Right lobe of liver (tissue), 6 donors: ENCODE measurements at regions of chr17 and their contacts with region 1.

Region 1: DNA sequence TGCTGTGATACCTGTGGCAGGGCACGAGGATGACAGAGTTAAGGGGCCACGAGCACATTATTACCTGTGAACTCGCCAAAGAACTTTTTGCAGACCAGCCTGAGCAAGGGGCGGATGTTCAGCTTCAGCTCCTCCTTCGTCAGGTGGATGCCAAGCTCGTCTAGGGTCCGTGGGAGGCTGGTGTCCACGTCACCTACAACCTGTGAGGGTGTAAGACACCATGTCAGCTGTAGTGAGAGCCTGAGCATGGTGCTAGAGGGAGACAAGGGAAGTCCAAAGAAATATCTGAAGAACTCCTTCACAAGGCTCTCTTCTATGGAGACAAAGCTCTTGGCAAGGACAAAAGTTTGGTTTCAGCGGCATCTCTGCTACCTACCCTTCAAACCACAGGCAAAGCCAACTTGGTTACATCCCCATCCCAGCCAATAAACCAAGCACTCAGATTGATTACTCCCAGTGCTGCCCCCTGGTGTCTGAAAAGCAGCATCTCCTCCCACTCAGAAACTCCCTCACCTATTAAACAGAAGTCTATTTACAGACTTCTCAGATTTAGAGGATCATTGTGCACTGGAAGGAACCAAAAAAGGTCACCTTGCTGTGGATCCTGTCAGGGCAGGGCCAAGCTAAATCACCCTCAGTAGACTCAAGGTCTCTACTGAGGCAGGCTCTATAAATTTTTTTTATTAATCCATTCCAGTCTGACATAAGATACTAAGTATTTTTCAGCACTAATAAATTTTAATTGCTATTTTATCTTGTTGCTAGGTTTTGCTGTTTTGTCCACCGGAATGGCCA is 17.4 kb downstream of the HIGD1B start:
- DNase-seq: peak in 2 of 3 donors; percentile 62 to 68
- ATAC-seq: peak; percentile 81 to 89 (median 84)
- H3K4me3 ChIP-seq: no peak overlapping the region
- H3K27ac ChIP-seq: no peak overlapping the region
- H3K4me1 ChIP-seq: no peaks in the 10 kb centered on the region
- H3K27me3 ChIP-seq: no peaks in the 10 kb centered on the region
- CTCF ChIP-seq: peak; percentile 80 to 89 (median 85)
- POLR2A ChIP-seq: no peak

Region 2: GRCh38 chr17:44775136-44775837 is 89.8 kb before region 1 on chr17:
- intact Hi-C with region 1: loop called (anchors 2 to 5 kb)
- DNase-seq: peak; percentile 97 to 98 (median 98)
- ATAC-seq: peak; percentile 93 to 96 (median 95)
- H3K4me3 ChIP-seq: peak overlapping the region; percentile 45 to 59 (median 57)
- H3K27ac ChIP-seq: no peak overlapping the region
- H3K4me1 ChIP-seq: peaks cover 0 to 13% (median 3%) of the 10 kb centered on the region in 4 donors
- H3K27me3 ChIP-seq: no peaks in the 10 kb centered on the region
- CTCF ChIP-seq: no peak
- POLR2A ChIP-seq: no peak

Region 3: DNA sequence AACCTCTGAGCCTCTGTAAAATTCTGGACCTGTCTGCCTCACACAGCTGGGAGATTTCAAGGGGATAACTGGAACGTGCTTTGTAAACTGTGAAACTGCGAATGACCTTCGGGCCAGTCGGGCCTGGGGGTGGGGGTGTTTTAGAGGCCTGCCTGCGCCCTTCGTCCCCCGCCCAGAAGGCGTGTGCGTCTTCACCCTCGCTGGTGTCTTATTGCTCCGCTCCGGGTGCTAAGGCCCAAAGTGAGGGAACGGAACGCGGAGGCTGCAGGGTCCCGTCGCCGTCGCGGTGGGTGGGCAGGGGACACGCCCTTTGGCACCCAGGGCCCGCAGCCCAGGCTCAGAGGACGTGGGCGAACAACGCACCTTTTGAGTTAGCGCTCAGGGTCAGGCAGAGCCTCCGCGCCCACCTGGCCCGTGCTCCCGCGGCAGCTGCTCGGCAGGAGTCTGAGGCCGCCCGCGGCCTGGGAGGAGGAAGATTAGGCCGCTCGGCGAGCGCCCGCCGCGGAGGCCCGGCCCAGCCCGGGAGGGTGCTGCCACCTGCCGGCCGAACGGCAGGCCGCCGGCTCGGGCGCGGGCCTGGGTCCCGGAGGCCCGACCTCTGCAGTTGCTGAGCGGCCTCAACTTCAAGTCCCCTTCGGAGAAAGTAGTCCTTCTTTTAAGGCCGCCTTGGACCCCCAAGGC is 156.7 kb after region 1 on chr17:
- intact Hi-C with region 1: no loop called
- DNase-seq: peak; percentile 75 to 80 (median 77)
- ATAC-seq: peak; percentile 79 to 89 (median 83)
- H3K4me3 ChIP-seq: peak overlapping the region; percentile 23 to 54 (median 41)
- H3K27ac ChIP-seq: peak overlapping the region; percentile 2 to 49 (median 42)
- H3K4me1 ChIP-seq: peaks cover 0 to 30% (median 6%) of the 10 kb centered on the region in 4 donors
- H3K27me3 ChIP-seq: no peaks in the 10 kb centered on the region
- CTCF ChIP-seq: peak; percentile 93 to 98 (median 96)
- POLR2A ChIP-seq: no peak